Vagina (tissue), 2 donors: ENCODE measurements at regions of chr1 and their contacts with region 1.

Region 1: DNA sequence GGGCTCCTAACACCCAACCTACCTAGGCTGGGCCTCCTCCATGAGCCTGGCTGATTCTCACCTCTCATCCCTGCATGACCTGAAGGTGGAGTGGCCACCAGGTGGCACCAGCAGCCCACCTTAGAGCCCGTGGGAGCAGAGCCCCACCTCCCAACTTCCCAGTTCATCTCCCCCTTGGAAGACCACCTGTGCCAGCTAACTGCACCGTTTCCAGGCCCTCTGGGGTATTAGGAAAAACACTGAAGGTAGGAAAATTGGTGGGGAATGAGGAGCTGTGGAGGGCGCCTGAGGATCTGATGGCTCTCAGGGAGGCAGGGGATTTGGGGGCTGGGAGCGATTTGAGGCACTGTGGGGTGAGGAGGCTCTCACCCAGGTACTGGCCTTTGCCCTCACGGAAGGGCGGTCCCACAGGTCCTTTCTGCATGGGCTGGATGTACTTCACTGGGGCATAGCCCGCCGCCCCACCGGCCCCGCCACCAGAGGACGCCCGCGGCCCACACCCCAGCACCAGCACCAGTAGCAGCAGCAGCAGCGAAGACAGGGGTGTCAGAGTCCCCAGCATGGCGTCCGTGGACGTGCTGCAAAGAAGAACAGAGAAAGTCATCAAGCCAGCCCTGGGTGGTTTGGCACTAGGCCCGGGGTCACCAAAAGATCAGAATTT is 11.1 kb downstream of the ADPRS start:
- DNase-seq: no peak
- H3K4me3 ChIP-seq: no peak overlapping the region
- H3K27ac ChIP-seq: peak overlapping the region; percentile 49
- H3K4me1 ChIP-seq: peaks cover 9% of the 10 kb centered on the region
- H3K27me3 ChIP-seq: no peaks in the 10 kb centered on the region
- CTCF ChIP-seq: peak; percentile 88 to 96 (median 91)
- POLR2A ChIP-seq: no peak

Region 2: GRCh38 chr1:36134505-36135329 is 34.9 kb after region 1 on chr1:
- intact Hi-C with region 1: loop called (anchors 5 kb)
- DNase-seq: no peak
- H3K4me3 ChIP-seq: no peak overlapping the region
- H3K27ac ChIP-seq: peak overlapping the region; percentile 82
- H3K4me1 ChIP-seq: peaks cover 41% of the 10 kb centered on the region
- H3K27me3 ChIP-seq: no peaks in the 10 kb centered on the region
- CTCF ChIP-seq: peak; percentile 65 to 76 (median 69)
- POLR2A ChIP-seq: no peak

Region 3: DNA sequence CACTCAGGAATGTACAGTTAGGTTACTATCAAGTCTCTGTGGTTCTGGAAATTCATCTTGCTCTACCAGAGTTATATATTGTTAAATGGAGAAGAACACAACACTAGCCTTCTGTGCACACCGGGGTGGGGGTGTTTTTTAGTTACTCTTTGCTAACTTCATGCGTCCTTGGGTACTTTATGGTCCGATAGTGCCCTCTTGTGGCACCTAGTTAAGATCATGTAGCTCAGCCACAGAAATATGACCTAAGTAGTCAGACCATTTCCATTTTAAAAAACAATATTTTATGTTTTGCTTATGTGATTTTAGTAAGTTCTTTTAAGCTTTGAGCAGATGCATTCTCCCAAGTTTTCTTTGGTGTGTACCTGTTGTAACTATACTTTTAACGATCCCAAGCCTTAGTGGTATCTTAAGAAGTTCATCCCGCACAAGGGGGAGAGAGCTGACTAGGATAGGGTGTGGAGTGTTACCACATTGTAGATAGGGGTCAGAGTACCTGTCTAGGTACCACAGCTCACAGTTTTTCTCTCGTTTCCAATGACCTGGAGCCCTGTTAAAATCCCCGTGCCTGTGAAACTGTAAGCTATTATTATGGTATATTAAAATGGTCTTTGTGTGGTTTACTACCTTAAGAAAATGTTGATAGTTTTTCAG is 185.8 kb after region 1 on chr1:
- intact Hi-C with region 1: loop called (anchors 5 kb)
- DNase-seq: no peak
- H3K4me3 ChIP-seq: no peak overlapping the region
- H3K27ac ChIP-seq: no peak overlapping the region
- H3K4me1 ChIP-seq: peaks cover 10% of the 10 kb centered on the region
- H3K27me3 ChIP-seq: no peaks in the 10 kb centered on the region
- CTCF ChIP-seq: peak; percentile 45 to 79 (median 71)
- POLR2A ChIP-seq: no peak

Region 4: DNA sequence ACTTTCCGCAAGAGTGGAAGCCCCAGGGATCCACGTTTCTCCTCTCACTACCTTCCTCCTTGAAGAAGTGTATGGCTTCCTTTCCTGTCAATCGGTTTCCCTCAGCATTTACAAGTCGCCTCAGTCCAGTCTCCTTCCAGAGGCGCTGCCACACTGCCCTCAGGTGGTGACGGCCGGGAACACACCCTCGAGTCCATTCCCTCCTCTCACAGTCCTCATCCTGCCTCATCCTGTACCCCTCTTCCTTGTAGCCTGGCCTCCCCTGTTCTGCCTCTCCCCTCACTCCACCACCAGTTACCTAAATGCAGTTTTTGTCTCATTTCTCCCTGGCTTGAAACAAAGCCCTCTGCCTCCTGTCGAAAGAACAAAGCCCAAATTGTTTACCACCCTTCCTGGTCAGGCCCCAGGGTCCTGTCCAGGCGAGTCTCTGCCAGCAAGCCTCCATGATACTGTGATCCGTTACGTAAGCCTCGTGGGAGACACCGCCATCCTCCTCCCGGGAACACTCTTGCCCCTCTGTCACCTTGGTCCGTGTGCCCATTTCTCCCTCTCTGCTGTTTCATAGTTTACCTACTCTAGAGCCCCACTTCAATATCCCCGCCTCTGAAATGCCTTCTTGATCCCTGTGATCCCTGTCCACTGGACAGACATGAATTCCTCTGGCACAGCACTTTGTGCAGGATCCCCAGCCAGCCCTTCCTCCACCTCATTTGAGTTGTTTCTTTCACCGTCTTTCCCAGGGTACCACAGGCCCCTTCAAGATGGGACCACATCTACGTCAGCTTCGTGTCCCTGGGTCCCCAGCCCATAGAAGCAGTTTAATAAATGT is 321.2 kb after region 1 on chr1:
- intact Hi-C with region 1: loop called (anchors 5 kb)
- DNase-seq: no peak
- H3K4me3 ChIP-seq: no peak overlapping the region
- H3K27ac ChIP-seq: peak overlapping the region; percentile 69
- H3K4me1 ChIP-seq: peaks cover 6% of the 10 kb centered on the region
- H3K27me3 ChIP-seq: no peaks in the 10 kb centered on the region
- CTCF ChIP-seq: peak; percentile 83 to 94 (median 88)
- POLR2A ChIP-seq: no peak